ENCODE measurements at regions of chr7 and their contacts with region 1.

Region 1: GRCh38 chr7:22726345-22727185 is 435 bp upstream of the IL6 start:
- DNase-seq: peak in 1 of 2 donors; percentile 41
- H3K4me3 ChIP-seq: peak overlapping the region; percentile 35 to 45
- H3K27ac ChIP-seq: peak overlapping the region; percentile 35 to 53
- H3K4me1 ChIP-seq: peaks cover 3 to 40% (median 33%) of the 10 kb centered on the region in 4 donors
- H3K27me3 ChIP-seq: no peaks in the 10 kb centered on the region
- CTCF ChIP-seq: peak; percentile 47 to 62

Region 2: GRCh38 chr7:20862554-20862953 is 1864.0 kb before region 1 on chr7:
- intact Hi-C with region 1: no loop called
- DNase-seq: no peak
- H3K4me3 ChIP-seq: no peak overlapping the region
- H3K27ac ChIP-seq: no peak overlapping the region
- H3K4me1 ChIP-seq: no peaks in the 10 kb centered on the region
- H3K27me3 ChIP-seq: no peaks in the 10 kb centered on the region
- CTCF ChIP-seq: no peak

Region 3: DNA sequence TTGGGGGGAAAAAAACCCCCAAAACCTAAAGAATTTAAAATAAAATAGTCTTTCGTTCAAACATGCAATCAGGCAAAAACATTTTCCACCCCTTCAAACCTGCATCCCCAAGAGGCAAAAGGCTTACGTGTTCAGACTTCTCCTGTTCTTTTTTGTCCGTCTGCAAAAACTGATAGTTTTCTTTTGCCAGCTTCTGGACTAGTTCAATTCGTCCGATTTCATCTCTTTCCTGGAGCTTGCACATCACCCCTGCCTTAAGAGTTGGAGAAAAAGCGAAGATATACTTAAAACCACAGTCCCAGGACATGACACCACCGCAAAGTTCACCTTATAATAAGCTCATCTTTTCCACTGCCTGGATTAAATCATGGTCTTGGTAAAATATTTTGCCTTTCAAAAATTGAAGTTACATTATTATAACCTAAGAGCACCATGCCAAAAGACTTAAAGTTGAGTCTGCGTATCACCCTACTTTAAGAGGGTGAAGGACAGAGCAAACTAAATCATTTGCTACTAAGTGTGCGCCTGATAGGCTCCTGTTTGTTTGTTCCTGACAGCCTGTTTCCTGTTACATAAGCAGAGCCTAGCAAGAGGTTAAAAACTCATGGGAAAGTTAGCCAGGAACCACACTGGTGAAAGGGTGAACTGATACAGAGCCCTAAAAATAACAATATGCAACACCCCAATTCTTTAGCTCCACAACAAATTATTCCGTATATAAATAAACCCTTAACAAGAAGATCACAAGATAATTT is 506.6 kb before region 1 on chr7:
- intact Hi-C with region 1: loop called (anchors 10 kb)
- DNase-seq: no peak
- H3K4me3 ChIP-seq: peak overlapping the region; percentile 46
- H3K27ac ChIP-seq: peak overlapping the region; percentile 74 to 76
- H3K4me1 ChIP-seq: peaks cover 0 to 80% (median 18%) of the 10 kb centered on the region in 4 donors
- H3K27me3 ChIP-seq: no peaks in the 10 kb centered on the region
- CTCF ChIP-seq: no peak

Region 4: GRCh38 chr7:23531794-23532489 is 805.4 kb after region 1 on chr7 and contains the start of gene TRA2A:
- intact Hi-C with region 1: no loop called
- DNase-seq: peak; percentile 97 to 98
- H3K4me3 ChIP-seq: peak within 1 kb of the TSS; percentile 78 to 93
- H3K27ac ChIP-seq: peak within 1 kb of the TSS; percentile 93 to 99
- H3K4me1 ChIP-seq: peaks cover 0 to 37% (median 19%) of the 10 kb centered on the region in 4 donors
- H3K27me3 ChIP-seq: no peaks in the 10 kb centered on the region
- CTCF ChIP-seq: no peak

Measured in tibial artery (tissue), 4 donors.